Right ventricle myocardium inferior (tissue), 1 donor: ENCODE measurements at regions of chr19 and their contacts with region 1.

Region 1: DNA sequence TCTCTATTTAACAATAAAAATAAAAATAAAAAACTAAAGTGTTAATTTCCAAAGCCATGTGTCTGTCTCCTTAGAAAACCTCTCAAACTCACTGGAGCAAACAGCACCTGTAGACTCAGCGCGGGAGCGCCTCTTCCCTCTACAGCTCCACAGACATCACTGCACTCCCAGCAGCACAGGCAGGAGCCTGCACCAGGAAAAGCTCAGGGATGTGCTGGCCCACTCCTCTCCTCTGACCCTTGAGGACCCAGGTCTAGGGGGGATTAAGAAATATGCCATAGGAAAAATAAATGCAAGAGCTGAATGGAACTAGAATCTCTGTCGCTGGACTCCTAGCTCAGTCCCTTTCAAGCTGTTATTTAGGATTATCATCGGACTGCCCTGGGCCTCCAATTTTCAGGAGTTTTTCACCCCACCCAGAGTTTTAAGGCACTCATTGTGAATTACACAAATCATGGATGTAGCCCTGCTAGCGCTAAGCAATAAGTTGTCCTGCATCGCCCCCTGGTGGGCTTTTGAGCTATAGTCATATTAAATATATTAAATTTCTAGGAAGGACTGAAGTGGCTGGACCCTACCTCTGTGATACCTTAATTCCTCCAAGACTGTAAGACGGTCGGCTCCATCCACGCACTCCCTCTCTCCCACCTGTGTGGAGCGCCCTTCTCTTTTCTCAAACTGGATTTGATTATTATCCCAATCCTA is 333.9 kb downstream of the UQCRFS1 start:
- DNase-seq: no peak
- ATAC-seq: no peak

Region 2: DNA sequence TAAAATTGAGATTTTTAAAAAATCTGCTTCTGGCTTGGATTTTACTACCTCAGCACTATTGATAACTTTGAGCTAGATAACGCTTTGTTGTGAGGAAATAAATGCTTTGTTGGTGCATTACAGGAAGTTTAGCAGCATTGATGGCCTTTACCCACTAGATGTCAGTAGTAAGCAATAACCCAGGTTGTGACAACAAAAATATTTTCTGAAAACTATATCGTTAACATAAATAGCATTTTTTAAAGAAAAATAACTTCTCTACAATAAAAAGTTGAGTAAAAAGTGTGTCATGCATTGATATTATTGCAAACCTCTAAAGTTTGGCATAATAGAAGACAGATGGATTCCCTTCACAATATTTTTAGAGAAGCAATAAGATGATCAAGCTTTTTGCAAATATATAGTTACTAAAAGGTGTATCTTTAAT is 912.6 kb before region 1 on chr19:
- intact Hi-C with region 1: loop called (anchors 10 kb)
- DNase-seq: no peak
- ATAC-seq: no peak

Region 3: GRCh38 chr19:28466107-28467045 is 412.6 kb before region 1 on chr19:
- intact Hi-C with region 1: loop called (anchors 1 kb)
- DNase-seq: no peak
- ATAC-seq: no peak

Region 4: GRCh38 chr19:28737021-28737895 is 141.8 kb before region 1 on chr19:
- intact Hi-C with region 1: loop called (anchors 2 kb)
- DNase-seq: no peak
- ATAC-seq: peak; percentile 62

Region 5: DNA sequence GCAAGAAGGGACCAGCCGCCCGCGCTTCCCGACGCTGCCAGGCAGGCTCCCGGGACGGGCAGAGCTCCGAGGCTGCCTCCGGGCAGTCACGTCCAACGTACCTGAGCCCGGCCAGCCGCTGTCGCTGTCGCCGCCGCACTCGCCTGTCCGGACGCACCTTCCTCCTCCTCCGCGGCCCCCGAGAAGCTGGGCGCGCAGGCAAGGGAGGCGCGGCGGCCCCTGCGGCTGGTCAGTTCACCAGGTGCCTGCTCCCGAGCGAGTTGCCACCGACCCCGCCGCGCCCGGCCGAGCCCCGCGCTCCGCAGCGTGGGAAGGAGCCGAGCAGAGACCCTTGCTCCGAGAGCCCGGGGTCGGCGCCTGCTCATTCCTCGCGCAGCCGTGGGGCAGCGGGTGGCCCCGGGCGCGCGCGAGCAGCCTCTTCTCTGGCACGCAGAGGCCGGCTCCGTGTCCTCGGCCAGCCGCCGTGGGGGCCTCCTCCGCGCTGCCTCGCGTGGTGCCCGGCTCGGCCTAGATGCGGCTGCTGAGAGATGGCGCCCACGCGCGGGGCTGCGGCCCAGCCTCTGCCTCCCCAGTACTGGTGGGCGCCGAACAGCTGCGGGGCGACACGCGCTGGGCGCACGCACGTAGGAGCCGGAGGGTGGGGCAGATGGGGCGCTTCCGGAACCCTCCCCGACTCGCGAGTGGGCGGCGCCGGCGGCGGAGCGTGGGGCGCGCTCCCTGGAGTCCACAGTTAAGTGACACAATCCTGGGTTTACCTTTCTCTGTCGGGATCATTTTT is 85.4 kb before region 1 on chr19:
- intact Hi-C with region 1: loop called (anchors 5 kb)
- DNase-seq: no peak
- ATAC-seq: peak; percentile 89

Region 6: GRCh38 chr19:29201855-29202254 is 322.8 kb after region 1 on chr19:
- intact Hi-C with region 1: loop called (anchors 10 kb)
- DNase-seq: no peak
- ATAC-seq: no peak